Sciatic nerve (tissue), 2 donors: ENCODE measurements at regions of chr9 and their contacts with region 1.

Region 1: GRCh38 chr9:127734747-127735529 is at the start of gene TOR2A:
- DNase-seq: peak; percentile 99
- ATAC-seq: peak; percentile 94
- total RNA-seq, gene TOR2A: 6.8 TPM

Region 2: GRCh38 chr9:127503947-127504782 is 230.8 kb before region 1 on chr9:
- intact Hi-C with region 1: loop called (anchors 10 kb)
- DNase-seq: peak; percentile 93
- ATAC-seq: peak; percentile 86

Region 3: DNA sequence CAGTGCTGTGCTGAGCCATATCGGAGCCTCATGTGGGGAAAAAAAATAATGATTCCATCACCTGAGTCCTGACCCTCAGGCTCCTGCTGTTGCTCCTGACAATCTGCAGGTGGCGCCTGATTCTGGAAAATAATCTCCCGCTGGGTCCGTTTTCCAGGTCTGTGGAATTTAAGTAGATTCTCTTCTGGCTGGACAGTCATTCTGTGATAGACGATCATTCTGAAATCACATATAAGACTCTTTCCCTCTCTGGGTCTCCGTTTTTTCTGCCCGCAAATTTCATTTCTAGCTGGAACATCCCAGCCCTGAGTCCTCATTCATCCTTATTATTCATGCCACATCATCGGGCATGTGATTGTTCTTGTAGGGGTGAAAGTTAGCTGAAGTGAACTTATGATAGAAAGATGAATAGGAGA is 145.0 kb before region 1 on chr9:
- intact Hi-C with region 1: loop called (anchors 2 kb)
- DNase-seq: peak; percentile 84
- ATAC-seq: peak; percentile 73

Region 4: GRCh38 chr9:127697575-127697974 is 37.4 kb before region 1 on chr9:
- intact Hi-C with region 1: loop called (anchors 2 kb)
- DNase-seq: no peak
- ATAC-seq: no peak

Region 5: GRCh38 chr9:127785023-127785932 is 50.3 kb after region 1 on chr9:
- intact Hi-C with region 1: loop called (anchors 2 kb)
- DNase-seq: peak; percentile 93
- ATAC-seq: peak; percentile 78

Region 6: GRCh38 chr9:127869310-127870152 is 134.6 kb after region 1 on chr9:
- intact Hi-C with region 1: loop called (anchors 5 kb)
- DNase-seq: peak; percentile 97
- ATAC-seq: peak; percentile 89

Region 7: GRCh38 chr9:127927457-127927987 is 192.6 kb after region 1 on chr9:
- intact Hi-C with region 1: loop called (anchors 5 kb)
- DNase-seq: no peak
- ATAC-seq: no peak